ENCODE measurements at regions of chr4 and their contacts with region 1.

Region 1: GRCh38 chr4:98522636-98523395 is 135.6 kb downstream of the TSPAN5 start:
- DNase-seq: peak; percentile 74
- ATAC-seq: peak; percentile 92
- H3K4me3 ChIP-seq: no peak overlapping the region; the same call in 1 of the 2 replicates
- H3K27ac ChIP-seq: peak overlapping the region; percentile 85
- H3K4me1 ChIP-seq: peaks cover 37% of the 10 kb centered on the region
- H3K27me3 ChIP-seq: no peaks in the 10 kb centered on the region
- CTCF ChIP-seq: no peak

Region 2: GRCh38 chr4:97942137-97942536 is 580.7 kb before region 1 on chr4:
- CTCF ChIA-PET with region 1: no interaction called
- POLR2A ChIA-PET with region 1: no interaction called
- intact Hi-C with region 1: no loop called
- DNase-seq: peak; percentile 70
- ATAC-seq: peak; percentile 79
- H3K4me3 ChIP-seq: no peak overlapping the region
- H3K27ac ChIP-seq: peak overlapping the region; percentile 25
- H3K4me1 ChIP-seq: peaks cover 13% of the 10 kb centered on the region
- H3K27me3 ChIP-seq: no peaks in the 10 kb centered on the region
- CTCF ChIP-seq: no peak

Region 3: GRCh38 chr4:98557194-98557892 is 34.5 kb after region 1 on chr4:
- CTCF ChIA-PET with region 1: no interaction called
- POLR2A ChIA-PET with region 1: no interaction called
- intact Hi-C with region 1: loop called (anchors 5 kb)
- DNase-seq: peak; percentile 60
- ATAC-seq: peak; percentile 33
- H3K4me3 ChIP-seq: no peak overlapping the region
- H3K27ac ChIP-seq: peak overlapping the region; percentile 78
- H3K4me1 ChIP-seq: peaks cover 26% of the 10 kb centered on the region
- H3K27me3 ChIP-seq: no peaks in the 10 kb centered on the region
- CTCF ChIP-seq: no peak

Measured in PC-3 (cell line).